Endothelial cell of umbilical vein (primary cell): ENCODE measurements at regions of chr7 and their contacts with region 1.

Region 1: DNA sequence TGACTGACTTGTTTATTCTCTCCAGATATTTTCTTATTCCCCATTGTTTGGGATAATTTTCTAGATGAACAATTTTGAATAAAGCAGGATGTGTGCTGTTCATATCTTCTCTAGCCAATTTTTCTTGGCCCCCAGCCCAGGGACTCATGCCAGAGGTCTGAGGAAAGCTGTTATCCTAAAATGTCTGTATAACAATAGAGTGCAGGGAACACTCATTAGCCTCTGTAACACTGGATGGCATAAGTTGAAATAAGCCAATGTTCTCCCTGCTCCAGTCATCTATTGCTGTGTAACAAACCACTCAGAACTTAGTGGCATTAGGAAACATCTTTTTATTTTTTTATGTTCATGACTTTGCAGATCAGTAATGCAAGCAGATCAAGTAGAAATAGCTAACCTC is 121.7 kb upstream of the TRIM24 start:
- DNase-seq: peak; percentile 83
- H3K4me3 ChIP-seq: no peak overlapping the region
- H3K27ac ChIP-seq: peak overlapping the region; percentile 50
- H3K4me1 ChIP-seq: peaks cover 5% of the 10 kb centered on the region
- H3K27me3 ChIP-seq: no peaks in the 10 kb centered on the region
- CTCF ChIP-seq: no peak
- POLR2A ChIP-seq: no peak

Region 2: DNA sequence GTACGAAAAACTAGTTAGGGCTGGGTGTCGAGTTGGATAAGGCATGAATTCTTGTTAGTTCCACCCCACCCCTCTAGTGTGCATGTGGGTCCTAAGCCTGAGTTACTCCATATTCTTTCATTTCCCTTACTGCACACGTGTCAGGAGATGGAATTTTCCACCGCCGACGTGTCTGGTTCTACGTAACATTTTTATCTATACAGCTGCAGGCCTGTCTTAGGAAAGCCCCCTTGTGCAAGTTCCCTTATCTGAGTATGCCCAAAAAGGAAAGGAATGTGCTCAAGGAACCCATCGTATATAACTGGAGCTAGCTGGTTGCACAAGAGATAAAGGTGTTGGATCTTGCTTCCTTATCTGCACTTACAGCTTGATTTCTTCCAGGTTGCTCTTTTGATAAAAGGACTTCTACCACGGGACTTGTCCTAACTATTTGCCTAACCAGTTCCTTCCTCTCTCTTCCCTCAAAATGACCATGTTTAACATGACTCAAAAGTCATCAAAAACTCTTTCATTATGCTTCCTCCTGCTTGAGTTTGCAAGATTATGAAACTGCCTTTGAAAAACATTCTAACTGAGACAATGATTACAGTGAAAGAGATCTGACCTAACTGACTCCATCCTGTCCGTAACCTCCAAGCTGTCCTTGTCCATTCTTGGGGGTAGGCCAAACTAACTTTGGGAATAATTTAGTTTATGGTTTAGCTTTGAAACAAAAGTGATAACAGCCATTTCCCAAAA is 80.7 kb before region 1 on chr7:
- CTCF ChIA-PET with region 1: no interaction called
- POLR2A ChIA-PET with region 1: interaction called, 4 read pairs
- dilution Hi-C with region 1: no loop called
- intact Hi-C with region 1: loop called (anchors 1 kb)
- DNase-seq: peak; percentile 47
- H3K4me3 ChIP-seq: no peak overlapping the region
- H3K27ac ChIP-seq: peak overlapping the region; percentile 48
- H3K4me1 ChIP-seq: no peaks in the 10 kb centered on the region
- H3K27me3 ChIP-seq: no peaks in the 10 kb centered on the region
- CTCF ChIP-seq: no peak
- POLR2A ChIP-seq: no peak

Region 3: GRCh38 chr7:138324941-138325340 is 13.4 kb before region 1 on chr7:
- CTCF ChIA-PET with region 1: no interaction called
- POLR2A ChIA-PET with region 1: no interaction called
- dilution Hi-C with region 1: no loop called
- intact Hi-C with region 1: no loop called
- DNase-seq: no peak
- H3K4me3 ChIP-seq: no peak overlapping the region
- H3K27ac ChIP-seq: no peak overlapping the region
- H3K4me1 ChIP-seq: no peaks in the 10 kb centered on the region
- H3K27me3 ChIP-seq: no peaks in the 10 kb centered on the region
- CTCF ChIP-seq: no peak
- POLR2A ChIP-seq: no peak

Region 4: GRCh38 chr7:138400400-138400886 is 62.1 kb after region 1 on chr7:
- CTCF ChIA-PET with region 1: no interaction called
- POLR2A ChIA-PET with region 1: no interaction called
- dilution Hi-C with region 1: no loop called
- intact Hi-C with region 1: loop called (anchors 2 kb)
- DNase-seq: peak; percentile 46
- H3K4me3 ChIP-seq: no peak overlapping the region
- H3K27ac ChIP-seq: no peak overlapping the region
- H3K4me1 ChIP-seq: peaks cover 4% of the 10 kb centered on the region
- H3K27me3 ChIP-seq: no peaks in the 10 kb centered on the region
- CTCF ChIP-seq: no peak
- POLR2A ChIP-seq: no peak

Region 5: GRCh38 chr7:138407792-138408191 is 69.4 kb after region 1 on chr7:
- CTCF ChIA-PET with region 1: no interaction called
- POLR2A ChIA-PET with region 1: no interaction called
- dilution Hi-C with region 1: no loop called
- intact Hi-C with region 1: loop called (anchors 1 kb)
- DNase-seq: peak; percentile 46
- H3K4me3 ChIP-seq: no peak overlapping the region
- H3K27ac ChIP-seq: peak overlapping the region; percentile 6
- H3K4me1 ChIP-seq: peaks cover 17% of the 10 kb centered on the region
- H3K27me3 ChIP-seq: no peaks in the 10 kb centered on the region
- CTCF ChIP-seq: no peak
- POLR2A ChIP-seq: peak; percentile 37